Naive thymus-derived CD4-positive, alpha-beta T cell (primary cell): ENCODE measurements at regions of chr22 and their contacts with region 1.

Region 1: DNA sequence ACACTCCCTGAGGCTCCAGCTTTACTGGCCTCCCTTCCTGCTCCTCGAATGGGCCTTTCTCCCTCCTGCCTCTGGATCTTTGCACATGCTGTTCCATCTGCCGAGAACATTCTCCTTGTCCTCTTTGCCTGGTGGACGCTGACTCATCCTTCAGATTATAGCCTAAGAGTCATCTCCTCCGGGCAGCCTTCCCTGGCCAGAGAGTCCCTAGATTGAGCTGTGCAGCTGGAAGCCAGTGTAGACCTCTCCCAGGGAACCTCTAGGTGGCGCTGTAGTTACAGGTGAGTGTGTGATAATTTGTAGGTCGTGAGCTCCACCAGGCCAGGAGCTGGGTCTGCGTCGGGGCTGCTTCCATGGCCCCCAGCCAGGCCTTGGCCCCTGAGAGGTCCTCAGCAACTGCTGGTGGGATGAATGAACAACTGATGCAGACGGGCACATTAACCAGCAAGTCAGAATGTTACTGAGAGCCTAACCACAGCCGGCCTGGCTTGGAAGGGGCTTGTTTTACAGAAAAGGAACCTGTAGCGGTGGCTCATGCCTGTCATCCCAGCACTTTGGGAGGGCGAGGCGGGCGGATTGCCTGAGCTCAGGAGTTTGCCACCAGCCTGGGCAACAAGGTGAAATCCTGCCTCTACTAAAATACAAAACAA is 8.7 kb downstream of the PNPLA5 start:
- DNase-seq: peak in 7 of 9 donors; percentile 25 to 54 (median 28)
- ATAC-seq: peak; percentile 53
- H3K4me3 ChIP-seq: no peak overlapping the region
- H3K4me3 Mint-ChIP-seq: no peak overlapping the region
- H3K27ac ChIP-seq: no peak overlapping the region
- H3K27ac Mint-ChIP-seq: no peak overlapping the region
- H3K4me1 ChIP-seq: no peaks in the 10 kb centered on the region
- H3K4me1 Mint-ChIP-seq: peaks cover 0 to 4% (median 0%) of the 10 kb centered on the region in 7 donors
- H3K27me3 ChIP-seq: peaks cover 0 to 3% of the 10 kb centered on the region in 2 donors
- H3K27me3 Mint-ChIP-seq: peaks cover 3 to 44% (median 24%) of the 10 kb centered on the region in 5 donors

Region 2: GRCh38 chr22:43945632-43946383 is 62.7 kb after region 1 on chr22:
- CTCF ChIA-PET with region 1: no interaction called
- POLR2A ChIA-PET with region 1: no interaction called
- intact Hi-C with region 1: loop called in 1 of 2 experiments (anchors 1 kb)
- DNase-seq: peak; percentile 18 to 71 (median 48)
- ATAC-seq: peak; percentile 97
- H3K4me3 ChIP-seq: no peak overlapping the region
- H3K4me3 Mint-ChIP-seq: no peak overlapping the region
- H3K27ac ChIP-seq: no peak overlapping the region
- H3K27ac Mint-ChIP-seq: no peak overlapping the region
- H3K4me1 ChIP-seq: no peaks in the 10 kb centered on the region
- H3K4me1 Mint-ChIP-seq: peaks cover 0 to 5% (median 0%) of the 10 kb centered on the region in 7 donors
- H3K27me3 ChIP-seq: no peaks in the 10 kb centered on the region
- H3K27me3 Mint-ChIP-seq: peaks cover 2 to 12% (median 9%) of the 10 kb centered on the region in 5 donors